ENCODE measurements at regions of chr11 and their contacts with region 1.

Region 1: DNA sequence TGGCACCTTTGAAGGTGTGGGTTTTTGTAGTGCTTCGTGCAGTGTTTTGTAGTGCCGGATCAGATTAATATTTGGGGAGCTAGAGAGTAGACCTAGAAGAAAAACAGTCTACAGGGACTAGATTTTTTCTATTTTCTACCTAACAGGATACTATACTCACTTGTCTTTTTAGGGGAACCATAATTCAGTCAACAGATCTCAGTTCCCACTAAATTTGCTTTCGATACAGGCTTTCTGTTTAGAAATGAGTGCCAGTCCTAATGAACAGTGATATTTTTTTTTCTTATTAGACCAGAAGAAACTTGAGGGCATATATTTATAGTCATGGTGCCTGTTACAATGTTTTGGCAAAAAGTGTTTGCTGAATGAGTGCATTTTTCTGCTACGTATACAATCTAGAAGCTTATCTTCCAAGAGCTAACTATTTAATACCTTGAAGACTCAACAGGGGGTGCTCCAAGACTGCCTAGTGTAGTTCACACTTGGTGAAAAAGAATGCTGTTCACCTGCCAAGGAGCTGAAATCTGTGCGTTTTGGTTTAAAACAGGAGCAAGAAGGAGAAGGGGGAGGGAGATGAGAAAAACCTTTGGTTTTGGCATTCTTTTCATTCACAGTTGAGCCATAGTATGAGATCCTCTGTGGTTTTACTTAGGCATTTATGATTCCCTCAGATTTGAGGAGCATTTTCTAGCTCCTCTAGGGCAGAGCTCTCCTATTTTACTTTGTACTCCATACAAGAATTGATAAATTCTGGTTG is 44.9 kb upstream of the VSTM5 start:
- DNase-seq: peak; percentile 40
- H3K4me3 ChIP-seq: peak overlapping the region in 1 of 2 experiments; percentile 34; a peak in 1 of 4 replicates
- H3K27ac ChIP-seq: no peak overlapping the region
- H3K4me1 ChIP-seq: no peaks in the 10 kb centered on the region
- H3K27me3 ChIP-seq: no peaks in the 10 kb centered on the region; the same call in 1 of the 2 replicates
- CTCF ChIP-seq: peak; percentile 82
- EP300 ChIP-seq: no peak
- RAD21 ChIP-seq: peak; percentile 84

Region 2: DNA sequence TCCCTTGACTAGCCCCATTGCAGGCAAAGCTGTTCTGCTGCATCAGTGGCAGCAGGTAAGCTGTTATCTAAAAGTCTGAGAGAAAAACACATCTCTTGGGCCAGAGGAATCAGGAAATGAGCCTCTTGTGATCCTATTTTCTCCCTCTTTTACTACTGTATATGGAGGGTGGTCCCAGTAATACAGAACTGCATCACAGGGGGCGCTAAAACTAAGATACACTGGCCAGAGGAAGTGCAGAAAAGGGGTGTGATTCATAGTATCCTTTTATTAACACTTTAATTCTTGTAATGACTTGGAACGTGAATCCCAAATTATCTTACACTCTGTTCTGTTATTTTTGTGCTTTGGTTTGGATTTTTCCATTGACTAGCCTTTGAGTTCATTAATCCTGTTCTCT is 120.0 kb before region 1 on chr11:
- CTCF ChIA-PET with region 1: no interaction called
- POLR2A ChIA-PET with region 1: no interaction called
- DNase-seq: peak; percentile 43
- H3K4me3 ChIP-seq: no peak overlapping the region; a peak in 1 of 4 replicates
- H3K27ac ChIP-seq: no peak overlapping the region
- H3K4me1 ChIP-seq: no peaks in the 10 kb centered on the region
- H3K27me3 ChIP-seq: no peaks in the 10 kb centered on the region
- CTCF ChIP-seq: peak; percentile 44
- EP300 ChIP-seq: no peak
- RAD21 ChIP-seq: no peak

Region 3: DNA sequence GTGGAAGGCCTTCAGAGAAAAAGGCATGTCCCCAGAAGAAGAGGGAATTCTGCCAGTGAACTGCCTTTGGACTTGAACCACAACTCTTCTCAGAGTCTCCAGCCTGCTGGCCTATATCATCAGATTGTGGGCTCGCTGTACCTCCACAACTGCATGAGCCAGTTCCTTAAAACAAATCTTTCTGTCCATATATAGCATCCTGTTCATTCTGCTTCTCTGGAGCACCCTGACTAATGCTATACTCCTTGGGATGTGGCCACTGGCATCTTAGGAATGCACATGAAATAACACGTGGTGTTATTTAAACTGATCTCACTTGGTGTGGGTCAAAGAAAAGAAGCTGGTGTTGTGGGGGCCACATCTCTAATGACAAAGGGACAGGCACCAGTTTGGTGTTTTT is 13.4 kb after region 1 on chr11:
- CTCF ChIA-PET with region 1: interaction called, 23 read pairs
- POLR2A ChIA-PET with region 1: no interaction called
- DNase-seq: no peak
- H3K4me3 ChIP-seq: no peak overlapping the region
- H3K27ac ChIP-seq: peak overlapping the region in 1 of 2 experiments; percentile 15; a peak in 2 of 4 replicates
- H3K4me1 ChIP-seq: peaks cover 0 to 11% of the 10 kb centered on the region in 2 experiments; a peak in 3 of 4 replicates
- H3K27me3 ChIP-seq: no peaks in the 10 kb centered on the region
- CTCF ChIP-seq: no peak
- EP300 ChIP-seq: 0 out of 4 replicates have a peak, but pooled peaks of 1 of the 2 experiments have one; percentile 45
- RAD21 ChIP-seq: no peak

Region 4: DNA sequence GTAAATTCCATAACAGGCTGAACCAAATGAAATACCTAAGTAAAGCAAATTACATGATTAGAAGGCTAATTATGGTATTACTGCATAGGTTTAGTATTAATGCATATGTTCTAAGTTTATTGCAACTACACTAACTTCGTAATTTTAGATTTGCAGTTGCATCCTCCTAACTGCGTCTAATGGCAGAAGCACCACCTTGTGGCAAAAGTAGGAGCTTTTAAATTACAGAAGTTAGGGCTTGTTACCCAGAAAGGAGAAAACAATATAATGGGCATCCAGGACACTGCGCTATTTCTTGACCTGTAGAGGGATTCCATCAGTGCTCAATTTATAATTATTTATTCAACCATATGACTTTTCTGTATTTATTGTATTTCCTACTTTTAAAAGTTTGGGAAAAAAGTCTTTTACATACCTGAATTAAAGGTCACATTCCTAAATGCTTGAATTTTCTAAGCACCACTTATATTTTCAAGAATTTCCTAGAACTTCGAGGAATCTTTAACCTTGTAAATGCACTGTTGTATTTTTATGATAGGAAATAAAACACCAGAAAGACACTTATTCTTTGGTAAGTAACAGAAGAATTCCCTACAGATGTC is 522.2 kb after region 1 on chr11:
- CTCF ChIA-PET with region 1: interaction called, 55 read pairs
- POLR2A ChIA-PET with region 1: no interaction called
- DNase-seq: peak; percentile 26
- H3K4me3 ChIP-seq: no peak overlapping the region; a peak in 1 of 4 replicates
- H3K27ac ChIP-seq: no peak overlapping the region
- H3K4me1 ChIP-seq: no peaks in the 10 kb centered on the region
- H3K27me3 ChIP-seq: no peaks in the 10 kb centered on the region
- CTCF ChIP-seq: peak; percentile 73
- EP300 ChIP-seq: no peak
- RAD21 ChIP-seq: peak; percentile 72

Region 5: GRCh38 chr11:94424662-94425061 is 529.4 kb after region 1 on chr11:
- CTCF ChIA-PET with region 1: interaction called, 55 read pairs
- POLR2A ChIA-PET with region 1: no interaction called
- DNase-seq: no peak
- H3K4me3 ChIP-seq: no peak overlapping the region
- H3K27ac ChIP-seq: peak overlapping the region in 1 of 2 experiments; percentile 15; a peak in 1 of 4 replicates
- H3K4me1 ChIP-seq: peaks cover 0 to 6% of the 10 kb centered on the region in 2 experiments; a peak in 1 of 4 replicates
- H3K27me3 ChIP-seq: no peaks in the 10 kb centered on the region
- CTCF ChIP-seq: no peak
- EP300 ChIP-seq: no peak
- RAD21 ChIP-seq: no peak

Region 6: GRCh38 chr11:94504689-94505293 is 609.5 kb after region 1 on chr11:
- CTCF ChIA-PET with region 1: interaction called, 21 read pairs
- POLR2A ChIA-PET with region 1: no interaction called
- DNase-seq: peak; percentile 52
- H3K4me3 ChIP-seq: no peak overlapping the region
- H3K27ac ChIP-seq: no peak overlapping the region
- H3K4me1 ChIP-seq: no peaks in the 10 kb centered on the region
- H3K27me3 ChIP-seq: no peaks in the 10 kb centered on the region
- CTCF ChIP-seq: peak; percentile 85
- EP300 ChIP-seq: no peak
- RAD21 ChIP-seq: peak; percentile 78

Region 7: GRCh38 chr11:94511932-94512781 is 616.9 kb after region 1 on chr11 and contains the start of gene C11orf97:
- CTCF ChIA-PET with region 1: interaction called, 26 read pairs
- POLR2A ChIA-PET with region 1: no interaction called
- DNase-seq: peak; percentile 82
- H3K4me3 ChIP-seq: peak within 1 kb of the TSS; percentile 66 to 80
- H3K27ac ChIP-seq: no peak within 1 kb of the TSS
- H3K4me1 ChIP-seq: peaks cover 0 to 7% of the 10 kb centered on the region in 2 experiments; a peak in 1 of 4 replicates
- H3K27me3 ChIP-seq: no peaks in the 10 kb centered on the region
- CTCF ChIP-seq: no peak
- EP300 ChIP-seq: no peak
- RAD21 ChIP-seq: no peak
- polyA plus RNA-seq, gene C11orf97: not detected in 2 replicates